Activated naive CD4-positive, alpha-beta T cell treated with anti-CD3 and anti-CD28 coated beads for 36 hours (primary cell): ENCODE measurements at regions of chr4 and their contacts with region 1.

Region 1: DNA sequence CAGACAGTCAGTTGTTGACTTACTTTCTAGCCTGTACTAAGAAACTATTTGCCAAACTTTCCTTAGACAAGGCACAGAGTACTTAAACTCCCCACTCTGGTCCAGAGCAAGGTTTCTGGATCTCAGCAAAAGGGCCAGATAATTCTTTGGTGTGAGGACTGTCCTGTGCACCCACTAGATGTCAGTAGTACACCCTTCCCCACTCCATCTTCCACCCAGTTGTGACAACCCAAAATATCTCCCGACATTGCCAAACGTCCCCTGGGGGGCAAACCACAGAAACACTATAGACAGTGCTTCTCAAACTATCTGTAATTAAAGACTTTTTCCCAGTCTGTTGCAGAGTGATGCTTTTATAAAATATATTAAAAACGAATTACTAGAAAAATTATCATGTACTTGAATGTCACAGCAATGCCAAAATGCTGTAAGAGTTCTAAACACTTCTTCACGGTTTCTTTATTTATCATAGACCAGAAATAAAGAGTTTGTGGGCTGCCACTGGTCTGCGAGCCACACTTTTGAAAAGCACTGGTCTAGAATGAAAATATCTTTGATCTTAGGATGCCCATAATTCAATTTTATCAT is 203.5 kb downstream of the PRDM5 start:
- DNase-seq: peak; percentile 37
- H3K4me3 Mint-ChIP-seq: no peak overlapping the region
- H3K27ac Mint-ChIP-seq: no peak overlapping the region
- H3K4me1 Mint-ChIP-seq: no peaks in the 10 kb centered on the region
- H3K27me3 Mint-ChIP-seq: peaks cover 2% of the 10 kb centered on the region

Region 2: GRCh38 chr4:119977076-119977940 is 741.8 kb before region 1 on chr4:
- CTCF ChIA-PET with region 1: no interaction called
- intact Hi-C with region 1: no loop called
- DNase-seq: no peak
- H3K4me3 Mint-ChIP-seq: no peak overlapping the region
- H3K27ac Mint-ChIP-seq: no peak overlapping the region
- H3K4me1 Mint-ChIP-seq: no peaks in the 10 kb centered on the region
- H3K27me3 Mint-ChIP-seq: peaks cover 3% of the 10 kb centered on the region

Region 3: GRCh38 chr4:120156120-120156718 is 562.9 kb before region 1 on chr4:
- CTCF ChIA-PET with region 1: interaction called, 3 read pairs
- intact Hi-C with region 1: loop called (anchors 2 kb)
- DNase-seq: peak; percentile 32
- H3K4me3 Mint-ChIP-seq: no peak overlapping the region
- H3K27ac Mint-ChIP-seq: no peak overlapping the region
- H3K4me1 Mint-ChIP-seq: no peaks in the 10 kb centered on the region
- H3K27me3 Mint-ChIP-seq: no peaks in the 10 kb centered on the region

Region 4: DNA sequence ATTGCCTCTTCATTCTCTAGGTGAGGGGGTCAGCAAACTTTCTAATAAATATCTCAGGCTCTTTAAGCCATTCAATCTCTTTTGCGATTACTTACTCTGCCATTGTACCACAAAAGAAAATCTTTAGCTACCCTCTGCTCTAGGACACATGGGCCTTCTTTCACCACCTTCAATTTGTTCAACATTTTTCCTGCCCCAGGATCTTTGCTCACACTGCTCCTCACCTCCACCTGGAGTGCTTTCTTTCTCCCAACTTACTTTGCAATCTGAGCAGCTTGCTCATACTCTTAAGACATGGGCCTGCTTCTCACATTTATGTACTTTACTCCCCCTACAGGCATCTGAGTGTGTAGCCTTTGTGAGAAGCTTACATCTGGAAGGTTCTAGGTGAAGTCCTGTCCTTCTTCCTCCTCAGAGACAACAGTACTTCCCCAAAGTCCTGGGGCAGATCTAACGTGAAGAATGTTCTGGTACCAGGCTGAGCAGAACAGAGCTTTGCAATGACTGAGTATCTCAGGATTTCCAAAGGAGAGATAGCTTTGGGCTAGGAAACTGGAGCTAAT is 258.4 kb after region 1 on chr4:
- CTCF ChIA-PET with region 1: no interaction called
- intact Hi-C with region 1: loop called (anchors 1 kb)
- DNase-seq: peak; percentile 26
- H3K4me3 Mint-ChIP-seq: no peak overlapping the region
- H3K27ac Mint-ChIP-seq: no peak overlapping the region
- H3K4me1 Mint-ChIP-seq: no peaks in the 10 kb centered on the region
- H3K27me3 Mint-ChIP-seq: no peaks in the 10 kb centered on the region

Region 5: GRCh38 chr4:121096629-121097028 is 377.6 kb after region 1 on chr4:
- CTCF ChIA-PET with region 1: interaction called, 5 read pairs
- intact Hi-C with region 1: loop called (anchors 1 kb)
- DNase-seq: no peak
- H3K4me3 Mint-ChIP-seq: no peak overlapping the region
- H3K27ac Mint-ChIP-seq: no peak overlapping the region
- H3K4me1 Mint-ChIP-seq: no peaks in the 10 kb centered on the region
- H3K27me3 Mint-ChIP-seq: no peaks in the 10 kb centered on the region

Region 6: GRCh38 chr4:121307445-121308327 is 588.6 kb after region 1 on chr4:
- CTCF ChIA-PET with region 1: no interaction called
- intact Hi-C with region 1: loop called (anchors 1 kb)
- DNase-seq: peak; percentile 71
- H3K4me3 Mint-ChIP-seq: no peak overlapping the region
- H3K27ac Mint-ChIP-seq: no peak overlapping the region
- H3K4me1 Mint-ChIP-seq: peaks cover 15% of the 10 kb centered on the region
- H3K27me3 Mint-ChIP-seq: no peaks in the 10 kb centered on the region